ENCODE measurements at regions of chr7 and their contacts with region 1.

Region 1: DNA sequence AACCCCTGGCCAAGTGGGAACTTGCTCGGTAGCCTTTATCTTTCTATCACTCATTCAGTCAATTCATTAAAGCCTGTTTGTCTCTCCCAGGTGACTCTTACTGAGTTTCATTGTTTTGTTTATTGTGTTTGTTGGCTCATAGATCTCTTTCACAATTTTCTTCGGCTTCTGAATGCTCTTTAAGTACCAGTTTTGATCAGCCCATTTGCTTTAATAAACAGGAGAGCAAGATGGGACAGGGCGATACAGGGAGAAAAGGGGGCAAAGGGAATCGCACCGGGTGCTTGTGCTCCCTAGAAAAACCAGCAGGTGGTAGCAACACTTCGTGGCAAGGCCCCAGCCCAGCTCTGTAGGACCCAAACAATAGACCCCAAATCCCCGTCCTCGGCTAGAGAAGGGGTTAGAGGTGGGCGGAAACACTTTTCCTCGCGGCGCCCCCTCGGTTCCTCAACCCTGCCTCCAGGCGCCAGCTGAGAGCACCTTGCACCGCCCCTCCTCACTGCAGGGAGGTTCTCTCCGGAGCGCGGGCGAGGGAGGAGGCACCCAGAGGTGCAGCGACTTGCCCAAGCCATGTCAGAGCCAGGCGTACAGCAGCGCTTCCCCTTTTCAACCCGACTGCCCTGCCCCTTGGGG is 1.0 kb upstream of the EPHB6 start:
- DNase-seq: peak; percentile 49 to 60
- ATAC-seq: peak; percentile 56 to 86 (median 80)
- H3K4me3 ChIP-seq: peak overlapping the region; percentile 53 to 75 (median 70)
- H3K27ac ChIP-seq: peak overlapping the region in 9 of 10 donors; percentile 14 to 84 (median 56)
- H3K4me1 ChIP-seq: peaks cover 0 to 23% (median 17%) of the 10 kb centered on the region in 9 donors
- H3K27me3 ChIP-seq: peaks cover 0 to 24% (median 11%) of the 10 kb centered on the region in 7 donors
- CTCF ChIP-seq: peak; percentile 46 to 86 (median 74)

Region 2: DNA sequence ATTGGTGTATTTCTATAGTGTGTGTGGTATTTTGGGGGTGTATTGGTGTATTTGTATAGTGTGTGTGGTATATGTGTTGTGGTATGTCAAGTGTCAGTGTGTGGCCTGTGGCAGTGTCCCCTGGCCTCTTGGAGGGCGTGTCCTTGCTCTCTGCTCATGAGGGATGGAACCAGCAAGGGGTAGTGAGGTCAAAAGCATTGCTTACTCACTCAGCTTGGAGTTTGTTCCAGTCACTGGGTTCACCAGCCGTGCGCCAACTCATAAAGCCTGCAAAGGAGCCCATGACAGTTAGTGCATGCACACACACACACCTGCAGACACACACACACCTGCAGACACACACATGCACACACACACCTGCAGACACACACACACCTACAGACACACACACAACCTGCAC is 36.0 kb after region 1 on chr7:
- intact Hi-C with region 1: no loop called
- DNase-seq: no peak
- ATAC-seq: no peak
- H3K4me3 ChIP-seq: no peak overlapping the region
- H3K27ac ChIP-seq: no peak overlapping the region
- H3K4me1 ChIP-seq: no peaks in the 10 kb centered on the region
- H3K27me3 ChIP-seq: peaks cover 0 to 41% (median 19%) of the 10 kb centered on the region in 7 donors
- CTCF ChIP-seq: no peak

Region 3: GRCh38 chr7:143205560-143206293 is 351.9 kb after region 1 on chr7:
- intact Hi-C with region 1: loop called in 3 of 10 experiments (anchors 5 to 10 kb)
- DNase-seq: peak in 1 of 2 donors; percentile 23
- ATAC-seq: peak in 7 of 8 donors; percentile 33 to 80 (median 55)
- H3K4me3 ChIP-seq: peak overlapping the region in 1 of 10 donors; percentile 10
- H3K27ac ChIP-seq: no peak overlapping the region
- H3K4me1 ChIP-seq: peaks cover 0 to 14% (median 0%) of the 10 kb centered on the region in 9 donors
- H3K27me3 ChIP-seq: peaks cover 0 to 4% (median 0%) of the 10 kb centered on the region in 7 donors
- CTCF ChIP-seq: no peak

Region 4: GRCh38 chr7:143214789-143215679 is 361.2 kb after region 1 on chr7:
- intact Hi-C with region 1: loop called in 6 of 10 experiments (anchors 2 to 10 kb)
- DNase-seq: peak in 1 of 2 donors; percentile 56
- ATAC-seq: peak in 7 of 8 donors; percentile 23 to 82 (median 65)
- H3K4me3 ChIP-seq: no peak overlapping the region
- H3K27ac ChIP-seq: no peak overlapping the region
- H3K4me1 ChIP-seq: no peaks in the 10 kb centered on the region
- H3K27me3 ChIP-seq: peaks cover 0 to 7% (median 0%) of the 10 kb centered on the region in 7 donors
- CTCF ChIP-seq: peak; percentile 97 to 100 (median 99)

Measured in heart right ventricle (tissue), 16 donors.